ENCODE measurements at regions of chr16 and their contacts with region 1.

Region 1: DNA sequence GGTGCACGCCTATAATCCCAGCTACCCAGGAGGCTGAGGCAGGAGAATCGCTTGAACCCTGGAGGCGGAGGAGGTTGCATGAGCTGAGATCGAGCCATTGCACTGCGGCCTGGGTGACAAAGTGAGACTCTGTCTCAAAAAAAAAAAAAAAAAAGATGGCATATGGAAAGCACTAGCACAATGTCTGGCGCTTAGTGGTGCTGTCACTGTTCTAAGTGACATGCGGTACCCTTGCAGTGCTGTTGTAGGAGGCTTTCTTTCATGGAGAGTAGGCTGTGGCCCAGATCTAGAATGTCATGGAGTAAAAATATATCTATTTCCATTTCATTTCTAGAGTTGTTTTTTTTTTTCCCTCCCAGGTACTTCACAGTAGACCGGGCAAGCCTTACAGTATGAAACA is 14.6 kb upstream of the METTL9 start:
- DNase-seq: no peak

Region 2: GRCh38 chr16:22694887-22695382 is 1110.1 kb after region 1 on chr16:
- in situ Hi-C with region 1: loop called (anchors 5 kb)
- DNase-seq: no peak